Stomach (tissue), 19 donors: ENCODE measurements at regions of chr20 and their contacts with region 1.

Region 1: GRCh38 chr20:46022411-46023147 is 6.4 kb upstream of the SLC12A5 start:
- DNase-seq: peak; percentile 65 to 78
- H3K4me3 ChIP-seq: peak overlapping the region; percentile 33 to 53 (median 44)
- H3K27ac ChIP-seq: no peak overlapping the region
- H3K4me1 ChIP-seq: peaks cover 13 to 21% (median 20%) of the 10 kb centered on the region in 4 donors
- H3K27me3 ChIP-seq: peaks cover 13 to 99% (median 49%) of the 10 kb centered on the region in 3 donors
- CTCF ChIP-seq: peak in 4 of 7 experiments; percentile 55 to 82 (median 73)
- EP300 ChIP-seq: no peak
- POLR2A ChIP-seq: no peak

Region 2: DNA sequence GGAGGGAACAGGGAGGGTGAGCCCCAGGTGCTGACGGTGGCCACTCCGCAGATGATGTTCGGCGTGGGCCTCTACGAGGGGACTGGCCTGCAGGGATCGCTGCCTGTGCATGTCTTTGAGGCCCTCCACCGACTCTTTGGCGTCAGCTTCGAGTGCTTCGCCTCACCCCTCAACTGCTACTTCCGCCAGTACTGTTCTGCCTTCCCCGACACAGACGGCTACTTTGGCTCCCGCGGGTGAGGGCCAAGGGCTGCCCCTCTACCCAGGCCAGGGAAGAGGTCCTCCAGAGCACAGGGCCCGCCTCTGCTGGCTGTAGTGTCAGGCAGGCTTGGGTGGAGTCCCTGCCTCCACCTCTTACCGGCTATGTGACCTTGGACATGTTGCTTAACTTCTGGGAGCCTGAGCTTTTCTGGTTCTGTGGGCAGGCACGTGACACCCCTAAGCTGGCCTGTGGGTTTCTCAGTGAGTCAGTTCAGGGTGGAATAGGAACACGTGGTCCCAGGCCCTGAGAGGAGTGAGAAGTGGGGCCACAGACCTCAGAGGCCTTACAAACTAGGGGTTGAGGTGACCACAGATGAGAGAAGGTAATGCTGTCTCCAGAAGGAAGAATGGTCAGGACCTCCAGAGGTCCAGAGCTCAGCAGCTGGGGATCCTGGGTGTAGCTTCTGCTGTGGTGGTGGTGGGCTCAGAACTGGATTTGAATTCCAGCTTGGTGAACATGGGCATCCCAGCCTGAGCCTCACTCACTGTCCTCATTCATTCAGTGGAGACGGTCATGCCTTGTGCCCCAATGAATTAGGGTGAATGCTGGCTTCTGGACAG is 76.2 kb before region 1 on chr20:
- intact Hi-C with region 1: no loop called
- DNase-seq: peak in 1 of 2 donors; percentile 51
- H3K4me3 ChIP-seq: no peak overlapping the region
- H3K27ac ChIP-seq: peak overlapping the region in 4 of 5 donors; percentile 35 to 80 (median 62)
- H3K4me1 ChIP-seq: peaks cover 0 to 27% (median 16%) of the 10 kb centered on the region in 4 donors
- H3K27me3 ChIP-seq: no peaks in the 10 kb centered on the region
- CTCF ChIP-seq: no peak
- EP300 ChIP-seq: no peak
- POLR2A ChIP-seq: no peak

Region 3: DNA sequence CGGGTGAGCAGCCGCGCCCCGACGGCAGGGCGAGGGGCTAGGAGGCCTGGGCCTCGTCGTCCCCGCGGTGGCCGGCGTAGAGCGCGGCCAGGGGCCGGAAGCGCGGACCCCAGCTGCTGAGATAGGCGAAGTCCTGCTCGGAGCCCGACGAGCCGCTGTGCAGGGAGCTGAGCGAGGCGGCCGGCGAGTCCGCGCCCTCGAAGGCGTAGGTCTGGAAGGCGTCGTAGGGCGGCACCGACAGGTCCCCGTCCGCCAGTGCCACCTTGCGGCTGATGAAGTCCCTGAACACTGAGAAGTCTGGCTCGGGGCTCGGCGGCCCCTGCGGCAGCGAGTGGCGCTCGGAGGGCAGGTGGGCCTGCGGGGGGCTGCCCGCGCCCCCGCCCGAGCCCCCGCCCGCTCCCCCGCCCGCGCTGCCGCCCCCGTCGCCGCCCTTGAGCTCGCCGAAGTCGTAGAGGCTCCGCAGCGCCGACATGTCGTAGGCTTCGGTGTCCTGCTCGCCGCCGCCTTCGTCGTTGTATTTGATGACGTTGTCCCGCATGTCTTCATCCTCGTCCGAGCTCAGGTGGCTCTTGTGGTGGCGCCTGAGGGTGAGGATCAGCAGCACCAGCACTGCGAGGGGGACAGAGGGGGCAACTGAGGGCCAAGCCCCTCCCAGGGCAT is 152.0 kb after region 1 on chr20:
- intact Hi-C with region 1: loop called (anchors 10 kb)
- DNase-seq: peak; percentile 75 to 91
- H3K4me3 ChIP-seq: peak overlapping the region in 3 of 4 donors; percentile 13 to 24 (median 20)
- H3K27ac ChIP-seq: no peak overlapping the region
- H3K4me1 ChIP-seq: peaks cover 0 to 10% (median 4%) of the 10 kb centered on the region in 4 donors
- H3K27me3 ChIP-seq: peaks cover 14 to 91% (median 57%) of the 10 kb centered on the region in 3 donors
- CTCF ChIP-seq: peak in 4 of 7 experiments; percentile 30 to 51 (median 46)
- EP300 ChIP-seq: no peak
- POLR2A ChIP-seq: no peak

Region 4: GRCh38 chr20:46350201-46350985 is 327.8 kb after region 1 on chr20:
- intact Hi-C with region 1: loop called (anchors 10 kb)
- DNase-seq: peak in 1 of 2 donors; percentile 56
- H3K4me3 ChIP-seq: no peak overlapping the region
- H3K27ac ChIP-seq: peak overlapping the region in 3 of 5 donors; percentile 7 to 13 (median 8)
- H3K4me1 ChIP-seq: peaks cover 19 to 38% (median 28%) of the 10 kb centered on the region in 4 donors
- H3K27me3 ChIP-seq: no peaks in the 10 kb centered on the region
- CTCF ChIP-seq: no peak
- EP300 ChIP-seq: no peak
- POLR2A ChIP-seq: no peak